Activated T-helper 1 cell treated with anti-CD3 and anti-CD28 coated beads, Interleukin-12 subunit alpha, Interleukin-12 subunit beta, Interleukin-2, Interleukin-4 antibody, amounts not matched to agents 30 ng/mL and 10 ng/mL and 1 ng/mL, durations not matched to agents 14 hours and 24 hours and 36 hours (primary cell): ENCODE measurements at regions of chr9 and their contacts with region 1.

Region 1: DNA sequence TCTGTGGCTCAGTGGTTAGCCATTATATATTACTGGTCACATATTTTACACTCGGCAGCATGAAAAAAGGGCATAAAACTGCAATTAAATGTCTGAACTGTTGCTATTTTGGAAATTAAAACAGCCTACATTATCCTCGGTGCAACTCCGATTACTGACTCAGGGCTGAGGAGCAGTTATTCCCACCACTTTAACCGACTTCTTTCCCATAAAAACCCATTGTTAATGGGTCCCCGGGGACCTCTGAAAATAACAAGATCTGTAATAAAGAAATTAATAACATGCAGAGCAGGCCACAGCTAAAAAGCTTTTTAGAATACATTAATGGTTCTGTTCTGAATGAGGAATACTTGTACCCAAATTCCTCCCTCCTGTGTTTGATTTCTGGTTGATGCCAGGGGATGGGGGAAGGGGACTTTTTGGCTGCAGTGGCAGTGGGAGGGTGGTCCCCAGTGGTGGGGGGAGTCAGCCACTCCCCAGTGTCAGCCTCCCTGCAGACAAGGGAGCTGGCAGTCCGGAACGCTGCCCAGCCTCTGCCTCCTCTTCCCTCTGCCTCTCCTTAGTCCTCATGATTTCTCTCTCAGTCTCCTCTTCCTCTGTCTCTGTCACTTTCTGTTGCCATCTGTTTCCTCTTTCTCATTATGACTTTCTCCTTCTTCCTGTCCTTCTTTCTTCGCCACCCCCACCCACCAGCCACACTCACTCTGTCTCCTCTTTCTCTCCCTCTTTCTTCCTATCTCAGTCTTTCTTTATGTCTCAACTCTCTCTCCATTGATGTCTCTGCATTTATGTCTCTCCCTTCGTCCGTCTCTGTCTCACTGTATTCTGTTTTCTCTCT is 59.0 kb upstream of the ZBTB43 start:
- DNase-seq: no peak
- H3K4me3 Mint-ChIP-seq: no peak overlapping the region
- H3K27ac Mint-ChIP-seq: peak overlapping the region; percentile 57
- H3K4me1 Mint-ChIP-seq: peaks cover 38% of the 10 kb centered on the region
- H3K27me3 Mint-ChIP-seq: peaks cover 16% of the 10 kb centered on the region

Region 2: GRCh38 chr9:126722252-126723078 is 23.3 kb before region 1 on chr9:
- intact Hi-C with region 1: loop called (anchors 2 kb)
- DNase-seq: peak; percentile 80
- H3K4me3 Mint-ChIP-seq: peak overlapping the region; percentile 88
- H3K27ac Mint-ChIP-seq: peak overlapping the region; percentile 74
- H3K4me1 Mint-ChIP-seq: peaks cover 35% of the 10 kb centered on the region
- H3K27me3 Mint-ChIP-seq: peaks cover 10% of the 10 kb centered on the region

Region 3: DNA sequence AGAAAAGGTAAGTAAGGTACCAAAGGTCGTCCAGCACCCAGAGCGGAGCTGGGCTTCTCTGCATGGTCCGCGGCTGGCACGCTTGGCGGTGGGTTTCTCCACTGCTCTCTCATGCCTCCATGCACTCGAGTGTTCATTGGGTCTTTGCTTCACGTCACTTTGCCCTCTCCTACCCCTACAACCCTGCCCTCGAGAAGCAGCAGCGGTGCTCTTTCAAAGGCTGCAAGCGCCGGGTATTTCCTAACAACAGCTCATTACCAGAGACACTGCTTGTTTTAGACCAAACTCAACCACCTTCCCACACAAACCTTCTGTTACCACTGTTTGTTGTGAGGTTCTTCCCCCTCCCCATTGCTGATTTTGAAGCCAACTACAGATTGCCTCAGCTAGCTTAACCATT is 93.1 kb after region 1 on chr9:
- intact Hi-C with region 1: no loop called
- DNase-seq: no peak
- H3K4me3 Mint-ChIP-seq: no peak overlapping the region
- H3K27ac Mint-ChIP-seq: peak overlapping the region; percentile 67
- H3K4me1 Mint-ChIP-seq: peaks cover 39% of the 10 kb centered on the region
- H3K27me3 Mint-ChIP-seq: peaks cover 2% of the 10 kb centered on the region